Naive thymus-derived CD4-positive, alpha-beta T cell (primary cell): ENCODE measurements at regions of chr14 and their contacts with region 1.

Region 1: DNA sequence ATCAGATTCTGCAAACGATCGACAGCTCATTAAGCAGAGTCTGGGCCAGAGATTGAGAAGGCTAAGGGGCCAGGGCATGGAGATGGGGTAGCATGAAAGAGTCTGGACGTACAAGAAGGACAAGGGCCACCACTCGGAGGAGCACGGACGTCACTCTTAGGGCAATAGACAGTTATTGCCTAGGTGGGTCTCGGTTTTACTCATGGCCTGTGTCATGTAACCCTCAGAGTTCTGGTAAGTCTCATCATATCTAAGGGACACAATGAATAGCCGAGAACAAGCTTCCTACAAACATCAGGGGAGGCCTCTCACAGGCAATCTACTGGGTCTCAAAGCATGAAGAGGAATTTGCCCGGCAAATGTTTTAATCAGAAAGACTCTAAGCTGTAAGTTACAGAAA is 30.4 kb upstream of the ITPK1 start:
- DNase-seq: no peak
- ATAC-seq: no peak
- H3K4me3 ChIP-seq: no peak overlapping the region
- H3K4me3 Mint-ChIP-seq: no peak overlapping the region
- H3K27ac ChIP-seq: no peak overlapping the region
- H3K27ac Mint-ChIP-seq: no peak overlapping the region
- H3K4me1 ChIP-seq: no peaks in the 10 kb centered on the region
- H3K4me1 Mint-ChIP-seq: peaks cover 0 to 8% (median 3%) of the 10 kb centered on the region in 7 donors
- H3K27me3 ChIP-seq: no peaks in the 10 kb centered on the region
- H3K27me3 Mint-ChIP-seq: peaks cover 0 to 4% (median 0%) of the 10 kb centered on the region in 5 donors

Region 2: DNA sequence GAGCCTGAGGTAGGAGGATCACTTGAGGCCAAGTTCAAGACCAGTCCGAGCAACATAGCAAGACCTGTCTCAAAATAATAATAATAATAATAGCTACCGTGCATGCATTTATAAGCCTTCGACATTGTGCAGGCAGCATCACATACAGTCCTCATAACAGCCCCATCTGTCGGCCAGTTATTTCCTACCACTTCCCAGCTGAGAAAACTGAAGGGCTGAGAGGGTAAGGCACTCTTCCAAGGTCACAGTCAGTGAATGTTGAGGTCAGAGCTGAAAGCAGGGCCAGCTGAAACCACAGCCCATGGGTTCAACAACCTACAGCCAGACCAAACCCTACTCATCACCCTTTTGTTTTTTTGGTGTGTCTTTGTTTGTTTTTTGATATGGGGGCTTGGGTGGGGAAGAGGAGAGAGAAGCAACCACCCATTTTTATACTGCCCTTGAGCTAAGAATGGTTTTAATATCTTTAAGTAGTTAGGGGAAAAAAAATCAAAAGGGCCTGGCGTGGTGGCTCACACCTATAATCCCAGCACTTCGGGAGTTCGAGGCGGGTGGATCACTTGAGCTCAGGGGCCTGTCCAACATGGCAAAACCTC is 13.6 kb before region 1 on chr14:
- CTCF ChIA-PET with region 1: interaction called, 11 read pairs
- POLR2A ChIA-PET with region 1: no interaction called
- intact Hi-C with region 1: no loop called
- DNase-seq: peak in 4 of 9 donors; percentile 8 to 28 (median 16)
- ATAC-seq: peak; percentile 70
- H3K4me3 ChIP-seq: no peak overlapping the region
- H3K4me3 Mint-ChIP-seq: no peak overlapping the region
- H3K27ac ChIP-seq: no peak overlapping the region
- H3K27ac Mint-ChIP-seq: no peak overlapping the region
- H3K4me1 ChIP-seq: no peaks in the 10 kb centered on the region
- H3K4me1 Mint-ChIP-seq: peaks cover 0 to 2% (median 0%) of the 10 kb centered on the region in 7 donors
- H3K27me3 ChIP-seq: no peaks in the 10 kb centered on the region
- H3K27me3 Mint-ChIP-seq: peaks cover 0 to 11% (median 0%) of the 10 kb centered on the region in 5 donors

Region 3: GRCh38 chr14:93481758-93482157 is 335.6 kb after region 1 on chr14:
- CTCF ChIA-PET with region 1: no interaction called
- POLR2A ChIA-PET with region 1: no interaction called
- intact Hi-C with region 1: no loop called
- DNase-seq: no peak
- ATAC-seq: no peak
- H3K4me3 ChIP-seq: no peak overlapping the region
- H3K4me3 Mint-ChIP-seq: no peak overlapping the region
- H3K27ac ChIP-seq: no peak overlapping the region
- H3K27ac Mint-ChIP-seq: no peak overlapping the region
- H3K4me1 ChIP-seq: no peaks in the 10 kb centered on the region
- H3K4me1 Mint-ChIP-seq: no peaks in the 10 kb centered on the region
- H3K27me3 ChIP-seq: peaks cover 0 to 3% of the 10 kb centered on the region in 2 donors
- H3K27me3 Mint-ChIP-seq: peaks cover 2 to 42% (median 13%) of the 10 kb centered on the region in 5 donors